ENCODE measurements at regions of chr10 and their contacts with region 1.

Region 1: GRCh38 chr10:27285108-27285507 is 44.5 kb upstream of the ACBD5 start:
- DNase-seq: peak in 7 of 9 experiments; percentile 6 to 71 (median 42)
- ATAC-seq: peak; percentile 73
- H3K4me3 ChIP-seq: no peak overlapping the region
- H3K4me3 Mint-ChIP-seq: no peak overlapping the region
- H3K27ac ChIP-seq: no peak overlapping the region
- H3K27ac Mint-ChIP-seq: no peak overlapping the region
- H3K4me1 ChIP-seq: no peaks in the 10 kb centered on the region
- H3K4me1 Mint-ChIP-seq: peaks cover 3% of the 10 kb centered on the region
- H3K27me3 ChIP-seq: no peaks in the 10 kb centered on the region
- H3K27me3 Mint-ChIP-seq: no peaks in the 10 kb centered on the region
- CTCF ChIP-seq: peak; percentile 59

Region 2: GRCh38 chr10:25689346-25690100 is 1595.6 kb before region 1 on chr10:
- CTCF ChIA-PET with region 1: no interaction called
- POLR2A ChIA-PET with region 1: no interaction called
- intact Hi-C with region 1: no loop called
- DNase-seq: no peak
- ATAC-seq: no peak
- H3K4me3 ChIP-seq: no peak overlapping the region
- H3K4me3 Mint-ChIP-seq: no peak overlapping the region
- H3K27ac ChIP-seq: no peak overlapping the region
- H3K27ac Mint-ChIP-seq: no peak overlapping the region
- H3K4me1 ChIP-seq: no peaks in the 10 kb centered on the region
- H3K4me1 Mint-ChIP-seq: no peaks in the 10 kb centered on the region
- H3K27me3 ChIP-seq: no peaks in the 10 kb centered on the region
- H3K27me3 Mint-ChIP-seq: peaks cover 5% of the 10 kb centered on the region
- CTCF ChIP-seq: no peak

Region 3: DNA sequence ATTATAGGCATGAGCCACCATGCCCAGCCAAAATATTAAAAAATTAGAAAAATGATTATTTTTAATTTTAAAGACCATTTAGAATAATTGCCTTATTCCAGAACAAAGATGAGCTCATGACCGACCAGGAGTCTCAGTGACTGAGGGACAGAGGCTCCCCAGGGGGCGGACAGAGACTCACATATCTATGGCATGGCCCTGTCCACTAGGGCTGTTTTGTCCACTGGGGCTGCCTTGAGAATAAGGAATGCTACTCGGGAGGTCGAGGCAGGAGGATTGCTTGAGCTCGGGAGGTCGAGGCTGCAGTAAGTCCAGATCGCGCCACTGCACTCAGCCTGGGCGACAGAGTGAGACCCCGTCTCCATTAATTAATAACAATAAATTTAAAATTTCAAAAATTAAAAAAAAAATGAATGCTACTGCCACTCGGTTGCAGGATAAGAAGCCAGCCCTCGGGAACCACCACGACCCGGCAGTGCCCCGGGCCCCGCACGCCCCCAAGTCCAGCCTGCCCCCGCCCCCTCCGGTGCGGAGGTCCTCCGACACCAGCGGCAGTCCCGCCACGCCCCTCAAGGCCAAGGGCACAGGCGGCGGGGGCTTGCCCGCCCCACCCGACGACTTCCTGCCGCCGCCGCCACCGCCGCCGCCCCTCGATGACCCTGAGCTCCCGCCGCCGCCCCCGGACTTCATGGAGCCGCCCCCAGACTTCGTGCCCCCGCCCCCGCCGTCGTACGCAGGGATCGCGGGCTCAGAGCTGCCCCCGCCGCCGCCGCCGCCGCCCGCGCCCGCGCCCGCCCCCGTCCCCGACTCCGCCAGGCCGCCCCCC is 718.4 kb before region 1 on chr10:
- CTCF ChIA-PET with region 1: no interaction called
- POLR2A ChIA-PET with region 1: no interaction called
- intact Hi-C with region 1: no loop called
- DNase-seq: no peak
- ATAC-seq: no peak
- H3K4me3 ChIP-seq: no peak overlapping the region
- H3K4me3 Mint-ChIP-seq: no peak overlapping the region
- H3K27ac ChIP-seq: no peak overlapping the region
- H3K27ac Mint-ChIP-seq: peak overlapping the region; percentile 60
- H3K4me1 ChIP-seq: no peaks in the 10 kb centered on the region
- H3K4me1 Mint-ChIP-seq: no peaks in the 10 kb centered on the region
- H3K27me3 ChIP-seq: no peaks in the 10 kb centered on the region
- H3K27me3 Mint-ChIP-seq: no peaks in the 10 kb centered on the region
- CTCF ChIP-seq: no peak

Region 4: DNA sequence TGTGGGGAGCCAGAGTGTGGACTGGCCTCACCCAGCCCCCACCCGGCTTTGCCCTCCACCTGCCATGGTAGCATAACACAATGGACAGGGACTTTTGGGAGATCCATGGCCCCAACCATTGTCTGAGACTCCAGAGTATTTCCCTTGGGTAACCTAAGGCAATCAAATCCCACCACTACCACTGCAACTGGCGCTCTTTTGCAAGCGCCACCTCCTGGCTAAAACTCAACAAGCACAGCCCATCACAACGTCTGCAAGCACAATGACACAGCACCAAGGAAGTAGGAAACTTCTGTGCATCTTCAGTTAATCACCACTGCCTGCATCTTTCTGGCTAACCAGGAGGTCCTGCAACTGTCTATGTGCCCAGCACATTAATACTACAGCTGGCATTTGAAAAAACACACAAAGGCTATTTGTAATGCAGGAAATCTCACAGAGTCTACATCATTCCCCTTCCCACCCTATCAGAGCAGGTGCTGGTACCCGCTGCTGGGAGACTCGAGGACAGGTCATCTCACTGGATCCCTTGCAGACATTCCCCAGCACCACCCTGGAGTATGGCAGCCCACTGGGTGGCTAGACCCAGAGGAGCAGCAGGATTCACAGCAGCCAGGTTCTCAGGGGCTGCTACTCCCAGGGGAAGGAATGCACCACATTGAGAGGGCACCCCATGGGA is 212.5 kb before region 1 on chr10:
- CTCF ChIA-PET with region 1: no interaction called
- POLR2A ChIA-PET with region 1: no interaction called
- intact Hi-C with region 1: no loop called
- DNase-seq: no peak
- ATAC-seq: no peak
- H3K4me3 ChIP-seq: no peak overlapping the region
- H3K4me3 Mint-ChIP-seq: no peak overlapping the region
- H3K27ac ChIP-seq: no peak overlapping the region
- H3K27ac Mint-ChIP-seq: no peak overlapping the region
- H3K4me1 ChIP-seq: no peaks in the 10 kb centered on the region
- H3K4me1 Mint-ChIP-seq: no peaks in the 10 kb centered on the region
- H3K27me3 ChIP-seq: no peaks in the 10 kb centered on the region
- H3K27me3 Mint-ChIP-seq: no peaks in the 10 kb centered on the region
- CTCF ChIP-seq: no peak

Region 5: GRCh38 chr10:27252267-27253000 is 32.7 kb before region 1 on chr10:
- CTCF ChIA-PET with region 1: interaction called, 4 read pairs
- POLR2A ChIA-PET with region 1: no interaction called
- intact Hi-C with region 1: loop called (anchors 1 to 5 kb)
- DNase-seq: peak; percentile 58 to 92 (median 81)
- ATAC-seq: peak; percentile 86
- H3K4me3 ChIP-seq: peak overlapping the region; percentile 55 to 69
- H3K4me3 Mint-ChIP-seq: peak overlapping the region; percentile 76
- H3K27ac ChIP-seq: peak overlapping the region; percentile 60 to 75
- H3K27ac Mint-ChIP-seq: peak overlapping the region; percentile 92
- H3K4me1 ChIP-seq: peaks cover 14% of the 10 kb centered on the region
- H3K4me1 Mint-ChIP-seq: peaks cover 12% of the 10 kb centered on the region
- H3K27me3 ChIP-seq: no peaks in the 10 kb centered on the region
- H3K27me3 Mint-ChIP-seq: no peaks in the 10 kb centered on the region
- CTCF ChIP-seq: peak; percentile 84

Region 6: GRCh38 chr10:27959093-27959715 is 674.1 kb after region 1 on chr10:
- CTCF ChIA-PET with region 1: no interaction called
- POLR2A ChIA-PET with region 1: no interaction called
- intact Hi-C with region 1: loop called in 1 of 2 experiments (anchors 5 kb)
- DNase-seq: no peak
- ATAC-seq: no peak
- H3K4me3 ChIP-seq: no peak overlapping the region
- H3K4me3 Mint-ChIP-seq: peak overlapping the region; percentile 59
- H3K27ac ChIP-seq: no peak overlapping the region
- H3K27ac Mint-ChIP-seq: no peak overlapping the region
- H3K4me1 ChIP-seq: no peaks in the 10 kb centered on the region
- H3K4me1 Mint-ChIP-seq: peaks cover 16% of the 10 kb centered on the region
- H3K27me3 ChIP-seq: no peaks in the 10 kb centered on the region
- H3K27me3 Mint-ChIP-seq: no peaks in the 10 kb centered on the region
- CTCF ChIP-seq: no peak

Measured in CD8-positive, alpha-beta T cell (primary cell).